ENCODE measurements at regions of chr3 and their contacts with region 1.

Region 1: GRCh38 chr3:47420511-47421484 is 40.0 kb downstream of the PTPN23 start:
- DNase-seq: peak; percentile 83
- H3K4me3 Mint-ChIP-seq: peak overlapping the region; percentile 65
- H3K27ac Mint-ChIP-seq: peak overlapping the region; percentile 99
- H3K4me1 Mint-ChIP-seq: peaks cover 12% of the 10 kb centered on the region
- H3K27me3 Mint-ChIP-seq: no peaks in the 10 kb centered on the region

Region 2: GRCh38 chr3:47261301-47261700 is 159.5 kb before region 1 on chr3:
- intact Hi-C with region 1: no loop called
- DNase-seq: no peak
- H3K4me3 Mint-ChIP-seq: no peak overlapping the region
- H3K27ac Mint-ChIP-seq: no peak overlapping the region
- H3K4me1 Mint-ChIP-seq: no peaks in the 10 kb centered on the region
- H3K27me3 Mint-ChIP-seq: peaks cover 1% of the 10 kb centered on the region

Region 3: GRCh38 chr3:47342151-47342550 is 78.6 kb before region 1 on chr3:
- intact Hi-C with region 1: no loop called
- DNase-seq: no peak
- H3K4me3 Mint-ChIP-seq: no peak overlapping the region
- H3K27ac Mint-ChIP-seq: no peak overlapping the region
- H3K4me1 Mint-ChIP-seq: no peaks in the 10 kb centered on the region
- H3K27me3 Mint-ChIP-seq: no peaks in the 10 kb centered on the region

Region 4: DNA sequence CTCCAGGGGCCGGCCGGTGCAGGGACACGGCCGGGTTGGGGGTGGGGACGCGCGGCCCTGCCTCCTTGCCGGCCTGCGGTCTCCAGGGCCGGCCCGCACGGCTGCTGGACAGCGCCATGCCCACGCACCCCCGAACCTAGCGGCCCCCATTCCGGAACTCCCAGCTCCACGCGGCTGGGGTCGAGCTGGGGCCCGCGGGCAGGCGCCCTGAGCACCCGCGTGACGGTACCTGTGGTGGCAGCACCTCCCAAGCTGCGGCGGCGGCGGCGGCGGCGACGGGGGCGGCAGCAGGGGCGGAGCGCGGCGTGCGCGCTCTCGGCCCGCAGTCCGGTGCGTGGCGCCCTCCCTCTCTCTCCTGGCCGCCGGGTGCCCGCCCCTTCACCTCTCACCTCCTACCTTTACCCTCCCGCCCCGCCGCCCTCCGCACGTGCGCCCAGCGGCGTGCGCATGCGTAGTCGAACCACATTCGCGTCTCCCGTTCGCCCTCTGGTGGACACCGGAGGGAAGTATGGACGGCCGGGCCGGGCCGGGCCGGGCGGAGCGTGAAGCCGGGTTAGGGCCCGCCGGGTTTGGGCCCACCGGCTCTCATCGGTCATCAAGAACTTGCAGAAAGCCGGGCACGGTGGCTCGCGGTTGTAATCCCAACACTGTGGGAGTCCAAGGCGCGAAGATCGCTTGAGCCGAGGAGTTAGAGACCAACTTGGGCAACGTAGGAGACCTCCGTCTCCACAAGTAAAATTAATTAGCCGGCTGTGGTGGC is 55.0 kb after region 1 on chr3 and contains the start of gene SCAP:
- intact Hi-C with region 1: loop called (anchors 1 kb)
- DNase-seq: peak; percentile 92
- H3K4me3 Mint-ChIP-seq: peak within 1 kb of the TSS; percentile 99
- H3K27ac Mint-ChIP-seq: peak within 1 kb of the TSS; percentile 94
- H3K4me1 Mint-ChIP-seq: peaks cover 17% of the 10 kb centered on the region
- H3K27me3 Mint-ChIP-seq: no peaks in the 10 kb centered on the region
- total RNA-seq, gene SCAP: 79.6 and 83.9 TPM in 2 replicates

Region 5: GRCh38 chr3:47781685-47782445 is 361.1 kb after region 1 on chr3 and contains the start of gene SMARCC1:
- intact Hi-C with region 1: loop called (anchors 5 kb)
- DNase-seq: peak; percentile 99
- H3K4me3 Mint-ChIP-seq: peak within 1 kb of the TSS; percentile 92
- H3K27ac Mint-ChIP-seq: peak within 1 kb of the TSS; percentile 99
- H3K4me1 Mint-ChIP-seq: peaks cover 17% of the 10 kb centered on the region
- H3K27me3 Mint-ChIP-seq: no peaks in the 10 kb centered on the region
- total RNA-seq, gene SMARCC1: 150 and 166 TPM in 2 replicates

Measured in activated T-helper 2 cell treated with anti-CD3 and anti-CD28 coated beads, Interferon-gamma antibody, Interleukin-2, Interleukin-4, amounts not matched to agents 10 μg/mL and 5 μg/mL and 100 μg/mL, durations not matched to agents 14 hours and 24 hours and 36 hours (primary cell).